ENCODE measurements at regions of chr11 and their contacts with region 1.

Region 1: DNA sequence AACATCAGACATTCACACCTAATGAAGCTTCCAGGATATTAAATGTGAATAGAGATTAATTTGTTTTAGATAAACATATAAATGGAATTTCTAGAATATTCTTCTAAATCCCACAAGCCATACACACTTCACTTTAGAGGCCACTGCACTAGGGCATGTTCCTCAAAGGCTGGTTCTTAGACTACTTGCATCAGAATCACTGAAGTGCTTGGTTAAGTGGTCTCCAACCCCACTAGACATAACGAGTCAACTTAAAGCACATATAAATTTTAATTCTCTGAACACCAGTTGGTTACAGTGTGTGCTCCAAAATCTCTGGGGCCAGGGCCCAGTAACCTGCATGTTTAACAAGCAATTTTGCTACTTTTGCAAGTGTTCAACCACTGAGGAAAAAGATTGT is 7.9 kb upstream of the ALKBH8 start:
- DNase-seq: no peak
- ATAC-seq: no peak
- H3K4me3 ChIP-seq: no peak overlapping the region
- H3K4me3 Mint-ChIP-seq: no peak overlapping the region
- H3K27ac ChIP-seq: no peak overlapping the region
- H3K27ac Mint-ChIP-seq: no peak overlapping the region
- H3K4me1 ChIP-seq: peaks cover 0 to under 1% of the 10 kb centered on the region in 2 donors
- H3K4me1 Mint-ChIP-seq: peaks cover under 1% of the 10 kb centered on the region
- H3K27me3 ChIP-seq: peaks cover 0 to 4% (median 0%) of the 10 kb centered on the region in 4 experiments
- H3K27me3 Mint-ChIP-seq: no peaks in the 10 kb centered on the region
- CTCF ChIP-seq: no peak

Region 2: GRCh38 chr11:107669191-107669740 is 95.8 kb after region 1 on chr11:
- CTCF ChIA-PET with region 1: no interaction called
- POLR2A ChIA-PET with region 1: no interaction called
- intact Hi-C with region 1: no loop called
- DNase-seq: no peak
- ATAC-seq: no peak
- H3K4me3 ChIP-seq: no peak overlapping the region
- H3K4me3 Mint-ChIP-seq: no peak overlapping the region
- H3K27ac ChIP-seq: no peak overlapping the region
- H3K27ac Mint-ChIP-seq: no peak overlapping the region
- H3K4me1 ChIP-seq: no peaks in the 10 kb centered on the region
- H3K4me1 Mint-ChIP-seq: no peaks in the 10 kb centered on the region
- H3K27me3 ChIP-seq: peaks cover 0 to 4% (median 0%) of the 10 kb centered on the region in 4 experiments
- H3K27me3 Mint-ChIP-seq: peaks cover 16% of the 10 kb centered on the region
- CTCF ChIP-seq: no peak

Region 3: DNA sequence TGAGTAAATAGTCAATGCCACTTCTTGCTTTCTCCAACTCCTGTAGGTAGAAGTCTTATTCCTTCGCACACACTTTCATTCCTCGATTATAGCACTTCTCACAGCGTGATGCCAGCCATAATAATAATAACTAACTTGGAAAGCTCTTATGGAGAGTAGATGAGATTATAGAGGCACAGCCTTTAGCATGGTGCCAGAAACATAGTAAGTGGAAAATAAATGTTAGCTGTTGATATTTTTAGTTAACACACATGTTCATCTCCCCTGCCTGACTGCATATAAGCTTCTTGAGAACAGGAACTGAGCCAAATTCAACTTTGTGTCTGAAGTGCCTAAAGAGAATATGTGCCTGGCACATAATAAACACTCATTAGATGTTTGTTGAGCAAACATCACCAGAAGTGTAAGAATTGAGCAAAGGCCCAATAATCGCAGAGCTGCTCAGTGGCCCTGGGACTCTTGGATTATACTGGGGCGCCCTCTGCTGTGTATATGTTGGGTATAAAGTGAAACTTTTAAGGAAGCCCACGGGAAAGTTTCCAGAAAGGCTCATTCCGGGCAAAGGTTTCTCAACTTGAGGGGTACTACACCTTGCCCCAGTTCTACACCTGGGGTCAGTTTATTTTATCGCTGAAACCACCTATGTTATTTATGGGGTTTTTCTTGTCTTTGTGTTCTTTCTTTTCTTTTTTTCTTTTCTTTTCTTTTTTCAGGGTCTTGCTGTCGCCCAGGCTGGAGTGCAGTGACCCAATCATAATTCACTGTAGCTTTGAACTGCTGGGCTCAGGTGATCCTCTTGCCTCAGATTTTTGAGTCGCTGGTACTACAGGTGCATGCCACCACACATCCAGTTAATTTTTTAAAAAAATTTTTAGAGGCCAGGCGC is 116.1 kb after region 1 on chr11:
- CTCF ChIA-PET with region 1: interaction called, 26 read pairs
- POLR2A ChIA-PET with region 1: no interaction called
- intact Hi-C with region 1: loop called (anchors 1 kb)
- DNase-seq: peak; percentile 63
- ATAC-seq: peak; percentile 57
- H3K4me3 ChIP-seq: no peak overlapping the region
- H3K4me3 Mint-ChIP-seq: no peak overlapping the region
- H3K27ac ChIP-seq: no peak overlapping the region
- H3K27ac Mint-ChIP-seq: no peak overlapping the region
- H3K4me1 ChIP-seq: no peaks in the 10 kb centered on the region
- H3K4me1 Mint-ChIP-seq: no peaks in the 10 kb centered on the region
- H3K27me3 ChIP-seq: no peaks in the 10 kb centered on the region
- H3K27me3 Mint-ChIP-seq: peaks cover 21% of the 10 kb centered on the region
- CTCF ChIP-seq: peak; percentile 64

Region 4: DNA sequence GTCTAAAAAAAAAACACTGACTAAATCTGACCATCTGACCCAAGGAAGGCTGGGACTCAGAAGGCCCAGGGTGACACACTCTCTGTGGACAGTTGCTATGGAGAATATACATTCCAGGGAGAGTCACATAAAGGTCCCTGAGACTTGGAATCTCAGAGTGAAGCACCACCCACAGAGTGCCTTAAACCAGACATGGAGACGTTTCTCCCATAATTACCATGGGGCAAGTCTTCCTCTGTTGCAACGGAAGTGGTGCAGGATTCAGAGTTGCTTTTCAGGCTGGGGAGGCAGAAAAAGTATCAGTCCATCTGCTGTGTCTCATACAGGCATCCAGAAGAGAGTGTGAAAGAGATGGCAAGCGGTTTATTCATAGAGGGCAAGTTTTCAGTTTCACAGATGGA is 197.1 kb after region 1 on chr11:
- CTCF ChIA-PET with region 1: interaction called, 11 read pairs
- POLR2A ChIA-PET with region 1: no interaction called
- intact Hi-C with region 1: no loop called
- DNase-seq: no peak
- ATAC-seq: no peak
- H3K4me3 ChIP-seq: no peak overlapping the region
- H3K4me3 Mint-ChIP-seq: no peak overlapping the region
- H3K27ac ChIP-seq: no peak overlapping the region
- H3K27ac Mint-ChIP-seq: no peak overlapping the region
- H3K4me1 ChIP-seq: no peaks in the 10 kb centered on the region
- H3K4me1 Mint-ChIP-seq: no peaks in the 10 kb centered on the region
- H3K27me3 ChIP-seq: no peaks in the 10 kb centered on the region
- H3K27me3 Mint-ChIP-seq: peaks cover 25% of the 10 kb centered on the region
- CTCF ChIP-seq: no peak

Region 5: DNA sequence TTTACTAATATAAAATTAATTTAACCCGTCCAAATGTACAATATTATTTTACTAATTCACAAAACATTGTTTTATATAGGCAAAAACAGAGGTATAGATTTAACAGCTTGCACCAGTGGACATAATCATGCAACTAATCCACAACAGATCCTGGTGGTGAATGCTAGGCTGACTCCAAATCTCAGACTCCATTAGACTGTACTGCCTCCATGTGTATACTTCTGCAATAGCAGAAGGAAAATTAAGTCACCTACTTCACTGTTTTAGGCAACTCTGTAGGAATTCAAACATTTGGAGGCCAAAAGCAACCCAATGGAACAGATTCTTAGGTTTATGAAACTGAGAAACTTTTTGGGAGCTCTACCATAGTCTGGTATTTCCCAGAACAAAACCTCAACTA is 324.8 kb after region 1 on chr11:
- CTCF ChIA-PET with region 1: interaction called, 6 read pairs
- POLR2A ChIA-PET with region 1: no interaction called
- intact Hi-C with region 1: loop called (anchors 1 kb)
- DNase-seq: peak; percentile 34
- ATAC-seq: peak; percentile 47
- H3K4me3 ChIP-seq: no peak overlapping the region
- H3K4me3 Mint-ChIP-seq: no peak overlapping the region
- H3K27ac ChIP-seq: no peak overlapping the region
- H3K27ac Mint-ChIP-seq: no peak overlapping the region
- H3K4me1 ChIP-seq: no peaks in the 10 kb centered on the region
- H3K4me1 Mint-ChIP-seq: no peaks in the 10 kb centered on the region
- H3K27me3 ChIP-seq: no peaks in the 10 kb centered on the region
- H3K27me3 Mint-ChIP-seq: peaks cover 16% of the 10 kb centered on the region
- CTCF ChIP-seq: peak; percentile 69

Measured in B cell (primary cell).